ENCODE measurements at regions of chr9 and their contacts with region 1.

Region 1: DNA sequence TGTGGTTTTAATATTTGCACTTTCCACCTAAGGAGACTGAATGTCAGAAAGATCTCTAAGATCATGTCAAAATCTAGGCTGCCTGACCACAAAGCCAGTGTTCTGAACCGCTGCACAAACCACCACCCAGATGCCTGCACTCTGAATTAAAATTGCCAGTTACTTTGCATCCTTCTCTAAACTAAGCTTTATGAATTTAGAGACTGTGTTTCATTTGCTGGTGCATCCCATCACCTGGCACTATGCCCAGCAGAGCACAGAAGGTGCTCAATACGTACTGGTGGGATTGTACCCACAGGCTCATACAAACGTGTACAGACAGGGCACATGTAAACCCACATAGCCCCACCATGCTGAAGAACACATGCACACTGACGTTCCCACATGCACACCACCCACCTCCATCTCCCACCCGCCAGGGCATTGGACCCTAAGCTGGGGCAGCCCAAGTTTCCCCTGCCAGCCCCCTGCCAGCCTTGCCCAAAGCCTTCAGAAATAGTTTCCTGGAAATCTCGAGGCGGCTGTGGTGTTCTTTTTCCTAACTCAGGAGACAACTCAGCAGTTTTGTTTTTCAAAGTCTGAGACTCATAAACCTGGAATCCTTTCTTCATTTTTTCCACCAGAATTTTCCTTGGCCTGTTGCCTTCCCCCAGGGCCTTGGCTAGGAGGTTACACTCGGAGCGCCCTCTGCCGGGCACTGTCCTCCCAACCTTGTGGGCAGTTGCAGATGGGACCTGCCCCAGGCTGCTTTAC is 9.6 kb upstream of the TRAF1 start:
- DNase-seq: peak; percentile 94 to 95 (median 95)
- ATAC-seq: peak; percentile 79 to 91 (median 84)
- H3K4me3 ChIP-seq: no peak overlapping the region
- H3K27ac ChIP-seq: peak overlapping the region; percentile 7 to 83 (median 79)
- H3K4me1 ChIP-seq: peaks cover 2 to 38% (median 16%) of the 10 kb centered on the region in 4 donors
- H3K27me3 ChIP-seq: no peaks in the 10 kb centered on the region
- CTCF ChIP-seq: peak; percentile 89 to 95 (median 92)
- POLR2A ChIP-seq: no peak

Region 2: DNA sequence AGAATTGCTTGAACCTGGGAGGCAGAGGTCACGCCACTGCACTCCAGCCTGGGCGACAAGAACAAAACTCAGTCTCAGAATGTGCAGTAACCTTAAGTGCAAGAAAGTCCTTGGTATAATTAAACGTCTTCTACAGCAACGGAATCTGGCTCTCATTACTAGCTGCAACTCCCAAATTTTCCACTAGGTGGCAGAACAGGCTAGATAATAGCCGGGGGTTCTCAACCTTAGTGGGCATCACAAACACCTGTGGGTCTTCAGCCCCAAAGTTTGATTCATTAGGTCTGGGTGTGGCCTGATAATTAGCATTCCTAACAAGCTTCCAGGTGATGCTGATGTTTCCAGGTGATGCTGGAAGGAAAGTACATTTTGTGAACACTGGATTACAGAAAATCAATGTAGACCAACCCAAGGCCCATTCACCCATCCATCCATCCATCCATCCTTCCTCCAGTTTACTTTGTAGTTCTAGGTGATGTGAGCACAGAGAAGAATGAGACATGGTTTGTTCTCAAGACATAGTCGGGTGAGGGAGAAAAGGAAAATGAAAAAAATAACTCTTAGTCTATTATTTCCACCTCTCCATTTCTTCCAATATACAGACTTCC is 180.3 kb before region 1 on chr9:
- intact Hi-C with region 1: loop called (anchors 10 kb)
- DNase-seq: no peak
- ATAC-seq: peak; percentile 78 to 87 (median 85)
- H3K4me3 ChIP-seq: no peak overlapping the region
- H3K27ac ChIP-seq: no peak overlapping the region
- H3K4me1 ChIP-seq: peaks cover 0 to 8% (median 0%) of the 10 kb centered on the region in 4 donors
- H3K27me3 ChIP-seq: no peaks in the 10 kb centered on the region
- CTCF ChIP-seq: peak; percentile 87 to 93 (median 90)
- POLR2A ChIP-seq: no peak

Region 3: GRCh38 chr9:120767456-120768167 is 168.6 kb before region 1 on chr9:
- intact Hi-C with region 1: loop called in 1 of 2 experiments (anchors 10 kb)
- DNase-seq: no peak
- ATAC-seq: peak in 1 of 4 donors; percentile 49
- H3K4me3 ChIP-seq: no peak overlapping the region
- H3K27ac ChIP-seq: no peak overlapping the region
- H3K4me1 ChIP-seq: no peaks in the 10 kb centered on the region
- H3K27me3 ChIP-seq: no peaks in the 10 kb centered on the region
- CTCF ChIP-seq: no peak
- POLR2A ChIP-seq: no peak

Region 4: DNA sequence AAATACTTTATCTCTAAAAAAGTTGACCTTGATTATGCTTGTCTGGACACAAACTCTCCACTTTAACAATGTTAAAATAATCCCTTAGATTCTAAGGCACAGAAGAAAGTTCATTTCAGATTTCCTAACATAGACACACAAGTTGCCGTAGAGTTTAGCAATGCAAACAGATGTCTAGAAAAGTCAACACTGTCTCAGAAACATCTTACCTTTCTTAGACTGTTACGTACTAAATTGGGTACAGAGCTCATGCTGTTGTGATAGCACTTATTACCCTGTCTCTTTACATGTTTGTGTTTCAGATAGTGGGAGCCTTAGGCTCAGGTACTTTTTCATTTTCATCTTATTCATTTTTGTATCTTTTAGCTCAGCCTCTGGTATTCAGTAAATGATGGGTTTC is 61.9 kb after region 1 on chr9:
- intact Hi-C with region 1: no loop called
- DNase-seq: no peak
- ATAC-seq: peak; percentile 39 to 75 (median 62)
- H3K4me3 ChIP-seq: no peak overlapping the region
- H3K27ac ChIP-seq: peak overlapping the region in 1 of 3 donors; percentile 3
- H3K4me1 ChIP-seq: peaks cover 0 to 37% (median 5%) of the 10 kb centered on the region in 4 donors
- H3K27me3 ChIP-seq: no peaks in the 10 kb centered on the region
- CTCF ChIP-seq: no peak
- POLR2A ChIP-seq: no peak

Region 5: DNA sequence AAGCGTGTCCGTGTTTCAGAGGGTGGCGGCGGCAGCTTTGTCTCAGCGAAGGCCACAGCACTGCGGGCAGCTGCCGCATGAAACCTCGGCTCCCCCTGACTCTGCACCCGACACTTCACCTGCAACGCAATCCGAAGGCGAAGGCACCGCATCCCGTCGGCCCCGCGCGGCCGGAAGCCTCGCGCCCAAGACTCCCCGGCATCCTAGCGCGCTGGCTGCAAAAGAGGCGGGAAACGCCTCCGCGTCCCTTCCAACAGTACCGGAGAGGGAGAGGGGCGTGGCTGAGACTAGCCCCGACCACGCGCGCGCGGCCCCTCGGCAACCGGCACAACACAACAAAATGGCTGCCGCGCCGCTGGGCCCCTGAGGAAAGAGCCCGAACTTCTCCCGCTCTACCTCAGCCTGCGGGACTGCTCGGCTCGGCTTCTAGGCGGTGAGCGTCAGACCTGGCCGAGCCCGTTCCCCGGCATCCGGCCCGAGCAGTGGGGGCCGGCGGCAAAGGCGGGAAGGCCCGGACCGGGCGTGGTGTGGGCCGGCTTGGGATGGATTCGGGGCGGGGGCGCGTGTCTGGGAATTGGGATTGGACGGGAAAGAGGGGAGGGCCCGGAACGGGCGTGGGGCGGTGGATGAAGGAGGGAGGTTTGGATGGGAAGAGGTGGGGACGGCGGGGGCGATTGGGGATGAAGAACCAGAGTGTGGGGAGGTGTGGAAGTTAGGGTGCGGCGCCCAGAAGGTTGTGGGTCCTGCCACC is 138.6 kb after region 1 on chr9 and contains the start of gene CNTRL:
- intact Hi-C with region 1: no loop called
- DNase-seq: peak; percentile 92 to 94 (median 92)
- ATAC-seq: peak; percentile 90 to 95 (median 92)
- H3K4me3 ChIP-seq: peak within 1 kb of the TSS; percentile 64 to 90 (median 84)
- H3K27ac ChIP-seq: peak within 1 kb of the TSS; percentile 48 to 62 (median 60)
- H3K4me1 ChIP-seq: peaks cover 0 to 23% (median 4%) of the 10 kb centered on the region in 4 donors
- H3K27me3 ChIP-seq: no peaks in the 10 kb centered on the region
- CTCF ChIP-seq: no peak
- POLR2A ChIP-seq: peak; percentile 60
- total RNA-seq, gene CNTRL: 2.8 to 5.6 (median 4.2) TPM

Region 6: DNA sequence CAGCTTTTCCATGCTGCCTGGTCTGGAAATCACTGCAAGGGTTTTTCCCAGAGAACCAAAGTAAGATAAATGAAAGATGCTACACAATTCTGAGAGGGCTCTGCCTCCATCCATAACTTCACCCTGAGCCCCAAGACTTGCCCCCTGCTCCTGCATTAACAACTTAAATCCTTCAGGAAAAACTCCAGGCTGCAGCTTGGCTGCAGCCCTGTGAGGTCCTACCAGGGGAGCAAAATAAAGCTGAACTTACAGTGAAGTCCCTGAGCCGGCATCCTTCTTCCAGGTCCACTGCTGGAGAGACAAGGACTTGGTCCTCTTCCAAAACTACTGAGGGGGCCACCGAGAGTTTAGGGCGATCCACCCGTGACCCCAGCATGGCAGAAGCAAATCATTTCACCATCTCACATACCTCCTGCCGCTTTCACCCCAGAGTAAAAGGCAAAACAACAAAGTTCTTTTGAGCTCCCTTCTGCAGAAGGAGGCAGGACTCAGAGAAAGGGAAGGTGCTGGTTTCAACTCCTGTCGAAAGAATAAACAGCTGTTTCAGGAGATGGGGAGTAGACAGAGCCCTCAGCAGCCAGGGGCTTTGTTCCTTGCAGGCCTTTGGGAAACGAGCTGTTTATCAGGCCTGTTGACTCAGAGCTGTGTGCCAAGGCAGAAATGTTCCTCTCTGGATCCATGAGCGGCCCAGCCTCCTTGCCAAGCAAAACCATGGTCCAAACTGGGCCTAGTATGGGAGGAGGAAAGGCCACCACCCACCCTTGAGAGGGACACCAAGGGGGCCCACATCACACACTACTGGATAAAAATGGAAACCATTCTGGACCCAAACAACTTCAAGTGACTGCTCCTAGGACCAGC is 542.9 kb after region 1 on chr9:
- intact Hi-C with region 1: no loop called
- DNase-seq: peak in 1 of 3 donors; percentile 2
- ATAC-seq: peak in 1 of 4 donors; percentile 48
- H3K4me3 ChIP-seq: no peak overlapping the region
- H3K27ac ChIP-seq: no peak overlapping the region
- H3K4me1 ChIP-seq: no peaks in the 10 kb centered on the region
- H3K27me3 ChIP-seq: no peaks in the 10 kb centered on the region
- CTCF ChIP-seq: no peak
- POLR2A ChIP-seq: no peak

Measured in right lobe of liver (tissue), 6 donors.